Thyroid gland (tissue), 4 donors: ENCODE measurements at regions of chr5 and their contacts with region 1.

Region 1: DNA sequence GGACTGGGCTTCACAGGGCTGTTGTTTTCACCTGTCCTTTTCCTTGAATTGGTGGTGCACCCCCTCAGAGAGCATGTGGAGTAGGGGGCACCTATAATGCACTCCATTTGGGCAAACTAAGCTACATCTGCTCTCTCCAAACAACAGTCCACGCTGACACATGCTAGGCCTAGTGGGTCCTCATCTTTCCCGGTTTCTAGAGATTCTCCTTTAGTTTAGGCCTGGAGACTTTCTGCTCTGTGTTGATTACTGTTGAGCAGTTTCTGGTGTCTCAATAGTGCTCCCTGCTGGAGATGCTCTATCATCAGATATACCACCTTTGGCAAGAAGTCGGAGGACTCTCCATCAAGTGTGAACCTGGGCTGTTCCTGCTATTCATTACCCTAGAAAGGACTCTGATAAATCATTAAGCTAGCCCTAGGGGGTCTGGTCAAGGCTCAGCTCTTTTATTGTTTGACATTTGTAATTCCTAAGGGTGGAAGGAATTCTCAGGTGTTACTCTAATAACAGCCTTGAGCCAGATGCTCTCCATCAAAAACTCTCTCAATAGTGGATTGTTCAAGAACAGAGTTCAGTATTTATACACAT is 64.0 kb upstream of the FYB1 start:
- DNase-seq: peak; percentile 21 to 31
- H3K4me3 ChIP-seq: no peak overlapping the region
- H3K27ac ChIP-seq: no peak overlapping the region
- H3K4me1 ChIP-seq: no peaks in the 10 kb centered on the region
- H3K27me3 ChIP-seq: no peaks in the 10 kb centered on the region
- CTCF ChIP-seq: peak in 5 of 6 experiments; percentile 19 to 73 (median 65)
- POLR2A ChIP-seq: no peak

Region 2: DNA sequence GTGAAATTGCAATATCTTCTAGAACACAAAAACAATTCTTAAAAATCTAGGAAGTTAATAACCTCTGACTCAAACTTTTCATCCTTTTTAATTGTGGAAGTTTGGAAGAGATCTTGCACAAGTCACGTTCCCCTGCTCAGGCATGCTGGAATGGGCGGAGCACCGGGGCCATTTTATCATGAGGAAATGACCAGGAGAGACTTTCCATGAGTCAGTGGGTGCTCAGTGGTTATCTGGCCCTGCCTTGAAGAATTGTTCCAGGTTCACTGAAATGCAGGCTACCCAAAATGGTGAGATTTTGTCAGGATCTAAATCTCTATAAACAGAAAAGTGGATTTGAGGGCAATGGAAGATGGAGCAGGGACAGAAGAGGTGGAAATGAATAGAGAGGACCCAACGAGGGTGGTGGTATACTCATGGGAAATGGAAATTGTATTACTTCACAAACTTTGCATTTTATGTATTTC is 125.2 kb before region 1 on chr5:
- intact Hi-C with region 1: loop called (anchors 10 kb)
- DNase-seq: no peak
- H3K4me3 ChIP-seq: no peak overlapping the region
- H3K27ac ChIP-seq: no peak overlapping the region
- H3K4me1 ChIP-seq: no peaks in the 10 kb centered on the region
- H3K27me3 ChIP-seq: no peaks in the 10 kb centered on the region
- CTCF ChIP-seq: no peak
- POLR2A ChIP-seq: no peak

Region 3: GRCh38 chr5:39225405-39226099 is 57.8 kb before region 1 on chr5:
- intact Hi-C with region 1: loop called (anchors 5 kb)
- DNase-seq: no peak
- H3K4me3 ChIP-seq: no peak overlapping the region
- H3K27ac ChIP-seq: no peak overlapping the region
- H3K4me1 ChIP-seq: no peaks in the 10 kb centered on the region
- H3K27me3 ChIP-seq: no peaks in the 10 kb centered on the region
- CTCF ChIP-seq: no peak
- POLR2A ChIP-seq: no peak

Region 4: DNA sequence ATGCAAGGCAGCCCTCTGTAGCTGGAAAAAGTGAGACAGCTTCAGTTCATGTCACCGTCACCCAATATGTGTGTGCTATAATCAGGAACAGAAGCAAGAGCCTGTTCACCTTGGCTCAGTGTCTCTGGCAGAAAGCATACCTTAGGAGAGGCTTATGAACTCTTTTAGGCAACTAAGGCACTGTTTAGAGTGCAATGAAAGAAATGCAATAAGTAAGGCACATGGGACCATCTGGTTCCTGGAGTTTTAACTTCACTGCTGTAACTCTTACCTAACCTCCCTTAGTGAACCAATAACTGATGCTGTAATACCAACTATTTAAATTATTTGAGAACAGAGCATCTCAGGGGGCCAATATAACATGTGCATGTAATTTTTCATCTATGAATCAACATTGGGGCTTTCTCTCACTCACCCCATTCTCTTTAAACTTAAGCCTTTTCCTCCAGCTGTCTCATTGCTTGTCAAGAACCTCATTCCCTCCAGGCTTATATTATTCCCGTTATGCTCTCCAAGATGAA is 48.6 kb after region 1 on chr5:
- intact Hi-C with region 1: no loop called
- DNase-seq: no peak
- H3K4me3 ChIP-seq: no peak overlapping the region
- H3K27ac ChIP-seq: no peak overlapping the region
- H3K4me1 ChIP-seq: no peaks in the 10 kb centered on the region
- H3K27me3 ChIP-seq: no peaks in the 10 kb centered on the region
- CTCF ChIP-seq: no peak
- POLR2A ChIP-seq: no peak